B cell (primary cell): ENCODE measurements at regions of chr2 and their contacts with region 1.

Region 1: DNA sequence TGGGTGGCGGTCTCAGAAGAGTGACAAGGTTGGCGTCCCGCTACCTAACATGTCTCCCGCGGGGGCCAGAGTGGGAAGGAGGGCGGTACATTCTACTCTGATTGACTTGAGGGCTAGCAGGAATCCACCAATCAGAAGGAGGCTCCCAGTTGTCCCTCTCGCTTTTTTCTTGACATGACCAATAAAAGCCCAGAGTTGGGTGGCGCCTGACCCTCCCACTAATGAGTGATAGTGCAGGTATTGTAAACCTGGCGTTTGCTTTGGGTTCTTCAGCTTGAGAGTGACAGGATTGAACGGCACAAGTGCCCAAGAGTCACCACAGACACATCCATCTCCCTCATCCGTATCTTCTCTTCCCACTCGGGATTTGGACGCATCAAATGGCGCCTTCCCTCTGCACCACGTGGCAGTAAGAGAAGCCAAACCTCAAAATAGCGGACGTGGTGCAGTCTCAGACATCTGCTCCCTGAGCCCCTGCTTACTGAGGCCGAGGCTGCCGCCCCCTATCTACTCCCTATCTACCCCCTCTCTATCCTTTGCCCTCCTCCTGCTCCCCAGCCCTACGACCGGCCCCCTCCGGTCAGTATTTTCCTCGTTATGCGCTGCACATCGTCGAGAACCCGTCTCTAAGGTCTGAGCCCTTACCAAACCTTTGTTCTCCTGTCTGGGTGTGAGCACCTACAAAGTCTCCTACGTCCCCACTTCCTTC is 768 bp upstream of the FAM161A start:
- DNase-seq: peak; percentile 96
- ATAC-seq: peak; percentile 83
- H3K4me3 ChIP-seq: peak overlapping the region; percentile 92 to 99 (median 98)
- H3K4me3 Mint-ChIP-seq: peak overlapping the region; percentile 94
- H3K27ac ChIP-seq: peak overlapping the region; percentile 56 to 68
- H3K27ac Mint-ChIP-seq: peak overlapping the region; percentile 92
- H3K4me1 ChIP-seq: peaks cover 11 to 16% of the 10 kb centered on the region in 2 donors
- H3K4me1 Mint-ChIP-seq: peaks cover 23% of the 10 kb centered on the region
- H3K27me3 ChIP-seq: no peaks in the 10 kb centered on the region
- H3K27me3 Mint-ChIP-seq: no peaks in the 10 kb centered on the region
- CTCF ChIP-seq: no peak

Region 2: DNA sequence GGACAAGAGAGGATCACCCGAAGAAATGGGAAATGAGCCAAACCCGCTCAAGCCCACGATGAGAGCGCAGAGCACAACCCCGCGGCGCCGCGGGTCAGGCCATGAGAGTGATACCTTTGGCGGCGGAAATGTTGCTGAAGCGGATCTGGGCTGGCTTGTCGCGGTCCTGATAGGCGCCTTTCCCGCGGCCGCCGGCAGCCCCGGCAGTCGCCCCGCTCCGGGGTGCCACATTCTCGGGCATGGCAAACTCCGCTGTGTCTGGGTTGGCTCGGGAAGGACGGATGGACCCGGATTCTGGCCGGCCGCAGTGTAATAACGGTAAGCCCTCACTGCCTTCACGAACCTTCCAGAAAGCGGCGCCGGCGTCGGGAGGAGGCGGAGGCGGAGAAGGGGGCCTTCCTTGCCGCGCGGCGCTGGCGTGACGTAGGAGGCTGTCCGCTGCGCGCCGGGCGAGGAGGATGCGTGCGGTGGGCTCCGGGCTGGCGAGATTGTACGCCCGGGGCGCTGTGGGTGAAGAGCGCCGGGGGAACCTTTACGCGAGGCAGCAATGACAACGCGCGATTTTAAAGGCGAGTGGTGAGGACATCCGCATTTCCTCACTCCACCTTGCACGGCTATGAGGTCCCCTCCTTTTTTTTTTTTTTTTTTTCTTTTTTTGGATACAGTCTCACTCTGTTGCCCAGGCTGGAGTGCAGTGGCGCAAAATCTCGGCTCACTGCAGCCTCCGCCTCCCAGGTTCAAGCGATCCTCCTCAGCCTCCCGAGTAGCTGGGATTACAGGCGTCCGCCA is 33.8 kb after region 1 on chr2 and contains the start of gene CCT4:
- CTCF ChIA-PET with region 1: no interaction called
- POLR2A ChIA-PET with region 1: interaction called, 7 read pairs
- intact Hi-C with region 1: loop called (anchors 1 kb)
- DNase-seq: peak; percentile 98
- ATAC-seq: peak; percentile 85
- H3K4me3 ChIP-seq: peak within 1 kb of the TSS; percentile 79 to 92 (median 89)
- H3K4me3 Mint-ChIP-seq: peak within 1 kb of the TSS; percentile 100
- H3K27ac ChIP-seq: peak within 1 kb of the TSS; percentile 95 to 96
- H3K27ac Mint-ChIP-seq: peak within 1 kb of the TSS; percentile 100
- H3K4me1 ChIP-seq: peaks cover 11 to 25% of the 10 kb centered on the region in 2 donors
- H3K4me1 Mint-ChIP-seq: peaks cover 32% of the 10 kb centered on the region
- H3K27me3 ChIP-seq: no peaks in the 10 kb centered on the region
- H3K27me3 Mint-ChIP-seq: no peaks in the 10 kb centered on the region
- CTCF ChIP-seq: no peak
- total RNA-seq, gene CCT4: 86.4 and 88.0 TPM in 2 replicates

Region 3: GRCh38 chr2:61978522-61978921 is 123.9 kb after region 1 on chr2:
- CTCF ChIA-PET with region 1: no interaction called
- POLR2A ChIA-PET with region 1: no interaction called
- intact Hi-C with region 1: no loop called
- DNase-seq: peak; percentile 10
- ATAC-seq: no peak
- H3K4me3 ChIP-seq: no peak overlapping the region
- H3K4me3 Mint-ChIP-seq: no peak overlapping the region
- H3K27ac ChIP-seq: peak overlapping the region in 1 of 2 donors; percentile 43
- H3K27ac Mint-ChIP-seq: no peak overlapping the region
- H3K4me1 ChIP-seq: peaks cover 8% of the 10 kb centered on the region in 2 donors
- H3K4me1 Mint-ChIP-seq: peaks cover 11% of the 10 kb centered on the region
- H3K27me3 ChIP-seq: no peaks in the 10 kb centered on the region
- H3K27me3 Mint-ChIP-seq: no peaks in the 10 kb centered on the region
- CTCF ChIP-seq: no peak

Region 4: DNA sequence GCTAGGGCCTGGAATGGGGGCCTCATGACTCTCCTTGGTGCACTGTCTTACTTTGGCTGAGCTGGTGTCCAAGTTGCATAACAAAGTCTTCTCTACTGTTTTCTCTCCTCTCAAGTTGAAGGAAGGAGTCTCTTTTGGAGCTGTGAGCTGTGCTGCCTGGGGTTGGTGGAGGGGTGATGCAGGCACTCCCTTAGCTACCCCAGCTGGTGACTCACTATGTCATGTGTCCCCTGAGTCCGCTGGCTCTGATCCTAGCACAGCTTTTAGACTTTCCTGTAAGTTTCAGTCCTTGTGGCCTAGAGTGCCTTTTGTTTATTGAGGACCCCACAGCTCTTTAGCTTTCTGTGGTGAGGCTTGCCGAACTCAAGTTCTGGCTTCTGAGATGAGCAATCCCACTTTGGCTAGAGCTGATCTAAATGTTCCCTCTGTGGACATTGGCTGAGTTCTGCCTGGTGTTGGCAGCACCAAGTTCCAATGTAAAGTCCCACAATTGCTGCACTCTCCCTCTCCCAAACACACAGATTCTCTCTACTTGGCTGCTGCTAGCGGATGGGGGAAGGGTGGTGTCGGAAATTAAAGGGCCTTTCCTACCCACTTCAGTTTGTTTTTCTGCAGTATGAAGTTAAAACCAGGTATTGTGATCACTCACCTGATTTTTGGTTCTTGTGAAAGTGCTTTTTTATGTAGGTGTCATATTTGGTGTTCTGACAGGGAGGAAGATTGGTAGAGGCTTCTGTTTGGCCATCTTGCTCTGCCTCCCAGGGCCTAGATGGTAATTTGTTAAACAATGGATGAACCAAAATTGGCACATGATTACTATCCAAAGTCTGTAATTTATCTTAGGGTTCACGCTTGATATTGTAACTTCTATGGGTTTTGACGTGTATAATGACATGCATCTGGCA is 134.1 kb after region 1 on chr2:
- CTCF ChIA-PET with region 1: no interaction called
- POLR2A ChIA-PET with region 1: no interaction called
- intact Hi-C with region 1: no loop called
- DNase-seq: no peak
- ATAC-seq: no peak
- H3K4me3 ChIP-seq: no peak overlapping the region
- H3K4me3 Mint-ChIP-seq: no peak overlapping the region
- H3K27ac ChIP-seq: no peak overlapping the region
- H3K27ac Mint-ChIP-seq: no peak overlapping the region
- H3K4me1 ChIP-seq: no peaks in the 10 kb centered on the region
- H3K4me1 Mint-ChIP-seq: peaks cover 2% of the 10 kb centered on the region
- H3K27me3 ChIP-seq: no peaks in the 10 kb centered on the region
- H3K27me3 Mint-ChIP-seq: no peaks in the 10 kb centered on the region
- CTCF ChIP-seq: no peak